T-cell (primary cell): ENCODE measurements at regions of chrX and their contacts with region 1.

Region 1: DNA sequence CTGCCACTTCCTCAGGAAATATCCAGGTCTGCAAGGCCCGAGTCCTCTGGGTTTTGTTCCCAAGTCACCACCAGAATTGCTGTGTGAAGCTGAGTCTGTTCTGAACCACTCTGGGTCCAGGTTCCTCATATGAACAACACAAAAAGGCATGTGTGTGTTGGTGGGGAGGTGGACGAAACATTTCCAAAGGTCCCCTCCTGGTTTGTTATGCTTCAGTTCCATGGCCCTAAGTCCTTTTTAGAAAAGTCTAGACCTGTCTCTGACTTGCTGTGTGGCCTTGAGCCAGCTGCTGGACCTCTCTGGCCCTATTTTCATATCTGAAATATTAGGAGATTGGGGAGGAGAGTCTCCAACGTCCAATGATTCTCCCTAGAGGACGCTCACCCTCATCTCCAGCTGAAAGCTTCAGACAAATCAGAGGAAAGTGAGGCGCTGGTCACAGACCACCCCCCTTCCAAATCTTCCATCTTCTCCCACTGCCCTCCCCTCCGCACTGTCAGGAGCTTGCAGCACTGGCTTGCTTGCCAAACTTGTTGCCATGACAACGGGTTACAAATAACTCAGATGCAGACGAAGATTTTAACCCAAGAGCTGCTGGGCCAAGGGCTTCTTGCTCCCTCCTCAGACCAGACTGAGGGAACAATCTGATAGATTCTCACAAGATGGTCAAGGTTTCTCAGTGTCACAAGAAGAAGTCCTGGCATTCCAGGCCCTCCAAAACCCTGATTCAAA is 64.5 kb downstream of the SMC1A start:
- DNase-seq: no peak
- ATAC-seq: no peak
- H3K4me3 ChIP-seq: no peak overlapping the region
- H3K4me3 Mint-ChIP-seq: no peak overlapping the region
- H3K27ac ChIP-seq: no peak overlapping the region
- H3K27ac Mint-ChIP-seq: no peak overlapping the region
- H3K4me1 ChIP-seq: no peaks in the 10 kb centered on the region
- H3K4me1 Mint-ChIP-seq: peaks cover 0 to 5% (median 0%) of the 10 kb centered on the region in 3 donors
- H3K27me3 ChIP-seq: no peaks in the 10 kb centered on the region
- H3K27me3 Mint-ChIP-seq: peaks cover 0 to 10% of the 10 kb centered on the region in 2 donors

Region 2: DNA sequence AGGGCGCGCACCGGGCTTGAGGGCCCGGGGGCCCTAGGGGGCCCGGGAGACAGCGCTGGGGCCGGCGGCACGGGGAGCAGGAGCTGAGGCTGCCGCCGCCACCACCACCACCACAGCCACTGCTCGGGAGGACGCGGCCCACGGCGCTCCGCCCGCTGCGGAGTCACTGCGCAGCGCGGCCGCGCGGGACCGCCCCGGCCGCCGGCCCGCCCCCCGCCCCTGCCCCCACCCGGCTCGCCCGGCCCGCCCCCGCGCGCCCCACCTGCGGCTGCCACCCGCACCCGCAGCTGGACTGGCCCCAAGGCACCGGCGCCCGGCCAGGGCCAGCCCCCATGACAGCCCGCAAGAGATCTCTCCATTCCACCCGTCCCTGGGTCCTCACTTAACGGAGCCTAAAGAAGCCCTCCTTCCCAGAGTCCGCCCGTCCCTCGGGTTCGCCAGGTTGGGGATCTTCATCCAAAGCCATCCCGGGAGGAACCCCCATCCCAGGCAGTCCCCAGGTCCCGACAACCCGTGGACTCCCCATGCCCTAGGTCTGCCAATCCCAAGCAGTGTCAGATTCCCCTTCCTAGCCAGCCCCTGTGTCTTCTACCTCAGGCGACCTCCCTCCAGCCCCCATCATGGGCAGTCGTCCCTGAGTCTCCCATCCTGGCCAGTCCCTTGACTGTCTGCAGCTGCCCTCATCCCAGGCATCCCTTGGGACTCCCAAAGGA is 36.6 kb before region 1 on chrX:
- CTCF ChIA-PET with region 1: no interaction called
- POLR2A ChIA-PET with region 1: no interaction called
- DNase-seq: peak in 5 of 35 experiments; percentile 3 to 37 (median 14)
- ATAC-seq: peak; percentile 59 to 74 (median 66)
- H3K4me3 ChIP-seq: peak overlapping the region in 1 of 2 donors; percentile 69
- H3K4me3 Mint-ChIP-seq: peak overlapping the region; percentile 70 to 81 (median 78)
- H3K27ac ChIP-seq: no peak overlapping the region
- H3K27ac Mint-ChIP-seq: no peak overlapping the region
- H3K4me1 ChIP-seq: peaks cover 0 to 25% of the 10 kb centered on the region in 2 experiments
- H3K4me1 Mint-ChIP-seq: peaks cover 18 to 34% (median 20%) of the 10 kb centered on the region in 3 donors
- H3K27me3 ChIP-seq: peaks cover 7 to 40% of the 10 kb centered on the region in 2 experiments
- H3K27me3 Mint-ChIP-seq: peaks cover 44 to 71% of the 10 kb centered on the region in 2 donors

Region 3: GRCh38 chrX:53383376-53384076 is 25.6 kb after region 1 on chrX:
- CTCF ChIA-PET with region 1: interaction called in 1 of 2 experiments, 10 read pairs
- POLR2A ChIA-PET with region 1: no interaction called
- DNase-seq: no peak
- ATAC-seq: no peak
- H3K4me3 ChIP-seq: no peak overlapping the region
- H3K4me3 Mint-ChIP-seq: no peak overlapping the region
- H3K27ac ChIP-seq: no peak overlapping the region
- H3K27ac Mint-ChIP-seq: no peak overlapping the region
- H3K4me1 ChIP-seq: no peaks in the 10 kb centered on the region
- H3K4me1 Mint-ChIP-seq: peaks cover 0 to 5% (median 0%) of the 10 kb centered on the region in 3 donors
- H3K27me3 ChIP-seq: no peaks in the 10 kb centered on the region
- H3K27me3 Mint-ChIP-seq: no peaks in the 10 kb centered on the region